PC-9 (cell line): ENCODE measurements at regions of chr1 and their contacts with region 1.

Region 1: DNA sequence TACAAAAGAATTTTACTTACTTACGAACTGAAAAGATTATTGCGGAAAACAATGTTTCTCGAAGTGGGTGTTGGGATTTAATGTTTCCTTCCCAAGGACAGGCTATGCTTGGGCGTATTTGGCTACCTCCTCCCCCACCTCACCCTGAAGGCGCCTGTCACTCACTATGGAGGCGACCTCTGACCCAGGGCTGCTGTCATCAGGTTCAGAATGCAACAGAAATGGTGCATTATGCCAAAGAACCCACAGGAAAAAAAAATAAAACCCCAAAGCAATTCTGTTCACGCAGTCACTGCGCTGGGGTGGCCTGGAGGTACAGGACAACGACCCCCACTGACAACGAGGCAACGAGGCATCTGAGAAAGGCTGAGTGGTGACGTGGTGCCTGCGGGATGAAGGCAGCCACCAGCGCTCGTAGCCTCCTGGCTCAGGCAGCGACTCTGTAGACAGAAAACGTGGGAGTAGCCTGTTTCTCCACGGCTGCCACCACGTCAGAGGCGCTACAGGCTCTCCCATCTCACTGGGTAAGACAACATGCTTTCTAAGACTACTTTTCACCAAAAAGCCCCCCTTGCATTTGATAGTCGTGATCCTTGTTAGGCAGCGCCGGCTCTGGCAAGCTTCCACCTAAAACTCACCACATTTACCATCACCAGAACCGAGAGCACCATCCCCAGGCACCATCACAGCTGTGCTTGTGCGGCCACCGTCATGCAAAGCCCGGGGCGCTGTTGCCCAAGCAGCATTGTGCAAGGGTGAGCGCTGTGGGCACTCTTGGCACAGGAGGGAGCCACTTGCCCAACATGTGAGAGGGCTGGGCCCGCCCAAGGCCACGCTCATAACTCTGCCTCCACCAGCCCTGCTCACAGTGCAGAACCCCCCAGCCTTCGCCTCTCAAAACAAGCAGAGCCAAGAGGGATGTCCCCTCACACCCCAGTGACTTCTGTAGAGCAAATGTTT is 14.3 kb downstream of the NADK start:
- DNase-seq: peak; percentile 78 to 93
- H3K4me3 ChIP-seq: no peak overlapping the region; the same call in 1 of the 2 replicates
- H3K27ac ChIP-seq: peak overlapping the region; percentile 83
- H3K4me1 ChIP-seq: peaks cover 65% of the 10 kb centered on the region
- H3K27me3 ChIP-seq: no peaks in the 10 kb centered on the region
- CTCF ChIP-seq: no peak; the same call in 1 of the 2 replicates

Region 2: DNA sequence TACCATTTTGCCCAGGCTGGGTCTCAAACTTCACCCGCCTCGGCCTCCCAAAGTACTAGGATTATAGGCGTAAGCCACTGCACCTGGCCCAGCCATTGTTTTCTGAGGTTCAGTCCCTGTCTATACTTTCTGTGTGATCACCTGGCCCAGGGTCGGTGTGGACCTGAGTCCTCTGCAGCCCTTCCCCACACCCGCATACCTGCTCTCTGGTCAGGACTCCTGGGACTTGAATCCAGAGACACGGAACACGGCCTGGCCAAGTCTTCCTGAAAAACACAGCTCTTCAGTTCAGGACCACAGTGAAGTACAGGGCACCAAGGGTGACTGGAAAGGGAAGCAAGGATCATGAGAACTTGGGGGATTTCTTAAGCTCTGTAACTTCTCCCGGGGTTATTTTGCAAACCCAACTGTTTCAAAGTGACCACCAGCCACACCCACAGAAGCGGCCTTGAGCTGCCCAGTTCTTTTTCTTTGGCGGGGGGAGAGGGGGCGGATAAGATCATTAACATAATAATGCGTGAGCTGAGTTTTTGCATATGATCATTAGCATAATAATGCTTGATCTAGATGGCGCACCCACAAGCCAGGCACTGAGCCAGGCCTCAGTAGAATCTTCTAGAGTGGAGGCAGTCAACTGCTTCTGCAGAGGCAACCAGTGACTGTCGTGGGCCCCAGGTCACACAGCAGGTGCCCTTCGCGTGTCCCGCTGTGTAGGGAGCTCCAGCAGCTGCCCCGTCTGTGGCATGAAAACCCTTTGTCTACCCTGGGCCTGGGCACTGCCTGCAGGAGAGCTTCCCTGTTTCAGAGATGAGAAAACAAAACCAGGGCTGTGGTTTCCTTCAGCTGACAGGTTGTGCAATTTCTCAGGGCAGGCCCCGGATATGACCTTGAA is 16.0 kb after region 1 on chr1:
- CTCF ChIA-PET with region 1: no interaction called
- POLR2A ChIA-PET with region 1: interaction called, 6 read pairs
- intact Hi-C with region 1: loop called (anchors 1 kb)
- DNase-seq: peak; percentile 60 to 69
- H3K4me3 ChIP-seq: peak overlapping the region; percentile 93; the same call in 1 of the 2 replicates
- H3K27ac ChIP-seq: peak overlapping the region; percentile 87
- H3K4me1 ChIP-seq: peaks cover 69% of the 10 kb centered on the region
- H3K27me3 ChIP-seq: no peaks in the 10 kb centered on the region
- CTCF ChIP-seq: no peak

Region 3: DNA sequence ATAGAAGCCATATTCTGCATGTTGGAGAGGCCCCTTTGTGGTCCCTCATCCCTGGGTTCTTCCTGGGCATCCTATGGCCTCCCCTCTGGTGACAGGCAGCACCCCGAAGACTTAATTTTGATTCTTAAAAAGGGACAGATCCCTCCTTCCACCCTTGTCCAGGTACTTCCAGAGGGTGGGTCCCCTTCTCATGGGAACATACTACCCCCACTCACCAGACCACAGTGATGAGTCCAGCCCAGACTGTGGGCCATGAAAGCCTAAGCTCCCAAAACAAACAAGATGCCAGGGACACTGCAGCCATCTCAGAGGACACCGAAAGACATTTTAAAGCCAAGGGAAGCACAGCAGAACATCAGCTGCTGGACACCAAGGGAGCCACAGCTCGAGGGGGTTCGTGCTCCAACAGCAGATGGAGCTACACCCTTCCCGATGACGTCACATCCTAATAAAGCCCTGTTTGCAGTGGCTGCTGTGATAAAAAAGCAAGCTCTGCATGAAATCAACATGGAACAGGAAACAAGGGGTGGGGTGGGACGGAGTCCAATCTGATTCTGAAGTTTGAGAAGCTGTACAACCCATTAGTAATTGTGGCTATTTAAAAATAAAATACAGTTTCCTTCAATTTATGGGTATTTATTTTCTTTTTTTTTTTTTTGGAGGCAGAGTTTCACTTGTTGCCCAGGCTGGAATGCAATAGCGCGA is 94.6 kb after region 1 on chr1:
- CTCF ChIA-PET with region 1: no interaction called
- POLR2A ChIA-PET with region 1: no interaction called
- intact Hi-C with region 1: no loop called
- DNase-seq: peak in 1 of 2 experiments; percentile 28
- H3K4me3 ChIP-seq: no peak overlapping the region
- H3K27ac ChIP-seq: 0 out of 2 replicates have a peak overlapping the region, but pooled peaks have one; percentile 9
- H3K4me1 ChIP-seq: peaks cover 17% of the 10 kb centered on the region; the same call in 1 of the 2 replicates
- H3K27me3 ChIP-seq: no peaks in the 10 kb centered on the region
- CTCF ChIP-seq: no peak

Region 4: DNA sequence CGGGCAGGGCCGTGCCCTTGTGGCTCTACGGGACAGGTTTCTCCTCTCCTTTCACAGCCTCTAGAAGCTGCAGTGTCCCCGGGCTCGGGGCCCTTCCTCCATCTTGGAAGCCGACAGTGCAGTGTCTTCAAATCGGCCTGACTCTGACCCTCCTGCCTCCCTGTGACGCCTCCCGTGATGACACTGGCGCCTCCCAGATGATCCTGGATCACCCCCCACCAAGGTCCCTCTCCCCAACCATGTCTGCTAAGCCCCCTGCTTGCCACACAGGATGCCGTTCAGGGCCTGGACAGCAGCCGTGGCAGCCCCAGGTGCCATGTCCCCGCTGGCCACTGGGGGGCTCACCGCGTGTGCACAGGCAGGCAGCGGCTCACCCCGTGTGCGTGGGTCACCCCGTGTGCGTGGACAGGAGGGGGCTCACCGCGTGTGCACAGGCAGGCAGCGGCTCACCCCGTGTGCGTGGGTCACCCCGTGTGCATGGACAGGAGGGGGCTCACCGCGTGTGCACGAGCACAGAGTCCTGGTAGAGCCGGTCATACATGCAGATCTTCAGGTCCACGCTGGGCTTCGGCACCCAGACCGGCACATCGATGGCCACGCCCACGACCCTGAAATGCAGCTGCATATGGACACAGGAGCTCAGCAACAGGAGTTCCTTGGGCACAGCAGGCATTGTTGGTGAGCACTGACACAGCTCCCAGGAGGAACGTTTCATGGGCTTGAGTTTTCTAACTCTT is 180.1 kb after region 1 on chr1:
- CTCF ChIA-PET with region 1: no interaction called
- POLR2A ChIA-PET with region 1: no interaction called
- intact Hi-C with region 1: no loop called
- DNase-seq: peak in 1 of 2 experiments; percentile 52
- H3K4me3 ChIP-seq: peak overlapping the region; percentile 27; the same call in 1 of the 2 replicates
- H3K27ac ChIP-seq: no peak overlapping the region
- H3K4me1 ChIP-seq: no peaks in the 10 kb centered on the region
- H3K27me3 ChIP-seq: peaks cover 67% of the 10 kb centered on the region
- CTCF ChIP-seq: peak; percentile 95